ENCODE measurements at regions of chr17 and their contacts with region 1.

Region 1: GRCh38 chr17:63697341-63698286 is 2.3 kb downstream of the LIMD2 start:
- DNase-seq: peak; percentile 85
- ATAC-seq: peak; percentile 35
- H3K4me3 Mint-ChIP-seq: peak overlapping the region; percentile 98
- H3K27ac Mint-ChIP-seq: peak overlapping the region; percentile 99
- H3K4me1 Mint-ChIP-seq: peaks cover 42% of the 10 kb centered on the region
- H3K27me3 Mint-ChIP-seq: no peaks in the 10 kb centered on the region

Region 2: GRCh38 chr17:63621766-63622519 is 75.7 kb before region 1 on chr17 and contains the start of gene MAP3K3:
- POLR2A ChIA-PET with region 1: interaction called, 20 read pairs
- DNase-seq: peak; percentile 90
- ATAC-seq: peak; percentile 93
- H3K4me3 Mint-ChIP-seq: peak within 1 kb of the TSS; percentile 99
- H3K27ac Mint-ChIP-seq: peak within 1 kb of the TSS; percentile 97
- H3K4me1 Mint-ChIP-seq: peaks cover 29% of the 10 kb centered on the region
- H3K27me3 Mint-ChIP-seq: peaks cover 8% of the 10 kb centered on the region
- total RNA-seq, gene MAP3K3: 49.0 to 51.2 TPM

Region 3: DNA sequence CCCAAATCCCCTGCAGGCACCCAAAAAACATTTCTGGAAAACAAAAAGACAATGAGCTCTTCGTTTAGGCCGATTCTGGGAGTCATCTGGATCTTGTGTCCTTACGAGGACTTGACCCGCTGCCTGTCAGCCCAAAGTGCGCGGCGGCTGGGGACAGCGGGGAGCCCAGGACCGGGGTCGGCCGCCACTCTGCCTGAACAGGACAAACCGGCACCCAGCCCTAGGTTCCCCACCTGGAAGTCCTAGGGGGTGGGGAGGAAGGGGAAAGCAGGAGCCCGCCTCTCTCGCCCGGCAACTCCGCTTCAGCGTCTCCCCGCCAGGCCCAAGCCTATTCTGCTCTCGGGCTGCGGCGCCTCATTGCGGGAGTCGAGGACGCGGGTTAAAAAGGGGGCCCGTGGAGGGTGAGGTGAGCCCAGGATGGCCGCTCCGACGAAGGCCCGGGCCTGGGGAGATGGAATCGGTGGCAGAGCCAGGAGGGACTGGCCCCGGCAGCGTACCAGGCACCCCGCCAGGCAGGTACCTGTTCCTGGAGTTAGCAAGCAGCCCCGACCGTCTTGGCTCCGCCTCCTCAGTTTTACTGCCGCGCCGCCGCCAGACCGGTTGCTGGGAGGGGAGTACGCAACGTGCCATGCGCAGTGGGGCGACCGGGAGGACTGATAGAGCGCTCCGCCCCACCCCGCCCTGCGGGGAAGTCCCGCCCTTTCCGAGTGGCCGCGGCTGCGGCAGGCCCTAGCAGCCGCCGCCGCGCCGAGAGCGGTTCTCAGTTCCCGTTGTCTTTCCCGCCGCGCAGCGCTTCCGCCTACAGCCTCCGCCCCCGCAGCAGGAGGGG is 43.8 kb after region 1 on chr17 and contains the start of gene STRADA:
- POLR2A ChIA-PET with region 1: interaction called, 56 read pairs
- DNase-seq: peak; percentile 97
- ATAC-seq: peak; percentile 93
- H3K4me3 Mint-ChIP-seq: peak within 1 kb of the TSS; percentile 92
- H3K27ac Mint-ChIP-seq: peak within 1 kb of the TSS; percentile 97
- H3K4me1 Mint-ChIP-seq: peaks cover 24% of the 10 kb centered on the region
- H3K27me3 Mint-ChIP-seq: no peaks in the 10 kb centered on the region
- total RNA-seq, gene STRADA: 54.0 to 61.4 TPM

Region 4: GRCh38 chr17:63827002-63827771 is 129.6 kb after region 1 on chr17 and contains the starts of genes FTSJ3 and PSMC5:
- POLR2A ChIA-PET with region 1: interaction called, 24 read pairs
- DNase-seq: peak; percentile 93
- ATAC-seq: peak; percentile 92
- H3K4me3 Mint-ChIP-seq: peak within 1 kb of the TSS; percentile 91
- H3K27ac Mint-ChIP-seq: peak within 1 kb of the TSS; percentile 94
- H3K4me1 Mint-ChIP-seq: peaks cover 59% of the 10 kb centered on the region
- H3K27me3 Mint-ChIP-seq: no peaks in the 10 kb centered on the region
- total RNA-seq, gene FTSJ3: 56.7 to 58.6 TPM
- total RNA-seq, gene PSMC5: 132 to 135 TPM

Region 5: DNA sequence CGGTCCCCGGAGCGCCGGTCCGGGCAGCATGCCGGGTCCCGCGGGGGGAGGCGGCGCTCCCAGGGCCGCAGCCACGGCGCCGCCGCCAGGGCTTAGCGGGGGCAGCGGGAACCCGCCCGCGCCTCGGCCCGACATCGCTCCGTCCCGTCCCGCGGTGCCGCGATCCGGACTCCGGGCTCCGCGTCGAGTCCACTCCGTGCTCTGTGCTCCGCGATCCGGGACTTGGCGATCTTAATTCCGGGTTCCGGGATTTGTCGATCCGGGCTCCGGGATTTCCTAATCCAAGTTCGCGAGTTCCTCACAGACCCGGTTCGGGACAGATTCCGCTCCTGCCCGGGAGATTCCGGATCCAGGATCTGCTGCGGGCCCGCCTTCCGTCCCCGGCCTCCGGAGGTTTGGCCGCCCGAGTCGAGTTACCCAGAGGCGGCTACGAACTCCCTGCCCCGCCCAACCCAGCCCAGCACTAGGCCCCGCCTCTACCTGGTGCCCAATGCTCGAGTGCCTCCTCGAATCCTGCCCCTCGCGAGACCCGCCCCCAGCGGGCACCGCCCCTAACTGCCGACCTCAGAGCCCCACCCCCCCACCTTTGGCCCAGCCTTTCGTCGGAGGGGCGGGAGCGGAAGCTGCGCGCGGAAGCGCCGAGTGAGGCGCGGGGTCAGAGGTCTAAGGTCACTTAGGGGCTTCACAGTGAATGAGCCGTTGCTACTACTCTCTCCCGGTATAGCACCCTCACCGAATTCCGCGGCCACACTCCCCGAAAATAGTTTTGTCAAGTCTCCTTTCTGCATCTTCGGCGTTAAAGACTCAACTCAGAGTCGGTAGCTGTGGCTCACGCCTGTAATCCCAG is 145.1 kb after region 1 on chr17 and contains the start of gene SMARCD2:
- POLR2A ChIA-PET with region 1: interaction called, 45 read pairs
- DNase-seq: peak; percentile 99
- ATAC-seq: peak; percentile 83
- H3K4me3 Mint-ChIP-seq: peak within 1 kb of the TSS; percentile 93
- H3K27ac Mint-ChIP-seq: peak within 1 kb of the TSS; percentile 95
- H3K4me1 Mint-ChIP-seq: peaks cover 26% of the 10 kb centered on the region
- H3K27me3 Mint-ChIP-seq: peaks cover 2% of the 10 kb centered on the region
- total RNA-seq, gene SMARCD2: 129 to 138 TPM

Region 6: GRCh38 chr17:63950941-63951507 is 253.4 kb after region 1 on chr17:
- POLR2A ChIA-PET with region 1: no interaction called
- DNase-seq: peak; percentile 53
- ATAC-seq: no peak
- H3K4me3 Mint-ChIP-seq: no peak overlapping the region
- H3K27ac Mint-ChIP-seq: no peak overlapping the region
- H3K4me1 Mint-ChIP-seq: peaks cover 14% of the 10 kb centered on the region
- H3K27me3 Mint-ChIP-seq: peaks cover 2% of the 10 kb centered on the region

Measured in activated naive CD8-positive, alpha-beta T cell treated with anti-CD3 and anti-CD28 coated beads, Interleukin-2, amount 10 ng/mL, durations not matched to agents 7 days and 5 days (primary cell).